K562 (cell line): ENCODE measurements at regions of chr11 and their contacts with region 1.

Region 1: GRCh38 chr11:62787005-62787759 is at the start of gene TMEM179B:
- DNase-seq: peak; percentile 83 to 99 (median 90)
- ATAC-seq: peak; percentile 80
- H3K4me3 ChIP-seq: peak within 1 kb of the TSS; percentile 82
- H3K27ac ChIP-seq: peak within 1 kb of the TSS; percentile 92
- H3K4me1 ChIP-seq: peaks cover 27 to 29% of the 10 kb centered on the region in 2 experiments
- H3K27me3 ChIP-seq: no peaks in the 10 kb centered on the region
- CTCF ChIP-seq: peak; percentile 67 to 90 (median 81)
- EP300 ChIP-seq: no peak
- POLR2A ChIP-seq: peak; percentile 96
- RAD21 ChIP-seq: peak; percentile 28 to 52; a peak in 3 of 4 replicates
- polyA plus RNA-seq, gene TMEM179B: 88.6 to 105 TPM

Region 2: DNA sequence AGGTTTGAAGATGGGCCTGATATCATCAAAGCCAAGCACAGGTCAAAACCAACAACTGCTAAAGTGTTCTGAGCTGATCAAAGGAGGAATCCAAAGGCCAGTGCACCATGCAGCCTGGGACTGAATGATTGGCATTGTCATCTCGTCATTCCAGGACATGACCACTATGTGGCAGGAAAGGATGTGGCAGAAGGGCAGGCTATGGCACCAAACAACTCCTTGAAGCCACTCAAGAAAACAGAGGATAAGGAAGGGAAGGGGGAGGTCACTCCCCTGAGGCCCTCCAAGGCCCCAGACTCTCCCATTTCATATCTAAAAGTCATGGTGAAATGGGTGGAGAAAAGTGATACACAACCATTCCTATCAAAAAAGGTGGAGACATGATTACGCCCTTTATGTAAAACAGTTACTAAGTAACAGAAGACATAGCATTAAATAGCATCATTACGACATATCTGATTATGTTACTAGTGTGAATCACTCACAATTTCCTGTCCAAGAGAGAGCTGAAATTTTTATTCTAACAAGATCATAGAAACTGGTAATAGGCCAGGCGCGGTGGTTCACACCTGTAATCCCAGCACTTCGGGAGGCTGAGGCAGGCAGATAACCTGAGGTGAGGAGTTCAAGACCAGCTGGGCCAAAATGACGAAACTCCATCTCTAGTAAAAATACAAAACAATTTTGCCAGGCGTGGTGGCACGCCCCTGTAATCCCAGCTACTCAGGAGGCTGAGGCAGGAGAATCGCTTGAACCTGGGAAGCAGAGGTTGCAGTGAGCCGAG is 289.9 kb before region 1 on chr11:
- CTCF ChIA-PET with region 1: no interaction called
- POLR2A ChIA-PET with region 1: no interaction called
- in situ Hi-C with region 1: no loop called
- intact Hi-C with region 1: no loop called
- DNase-seq: peak in 3 of 4 experiments; percentile 13 to 38 (median 27)
- ATAC-seq: peak; percentile 5; the same call in 1 of the 3 replicates
- H3K4me3 ChIP-seq: no peak overlapping the region
- H3K27ac ChIP-seq: no peak overlapping the region
- H3K4me1 ChIP-seq: peaks cover 31 to 40% of the 10 kb centered on the region in 2 experiments; a peak in 4 of 5 replicates
- H3K27me3 ChIP-seq: no peaks in the 10 kb centered on the region
- CTCF ChIP-seq: peak; percentile 30 to 59 (median 48)
- EP300 ChIP-seq: no peak
- POLR2A ChIP-seq: no peak
- RAD21 ChIP-seq: peak in 1 of 2 experiments; percentile 57; a peak in 3 of 4 replicates

Region 3: DNA sequence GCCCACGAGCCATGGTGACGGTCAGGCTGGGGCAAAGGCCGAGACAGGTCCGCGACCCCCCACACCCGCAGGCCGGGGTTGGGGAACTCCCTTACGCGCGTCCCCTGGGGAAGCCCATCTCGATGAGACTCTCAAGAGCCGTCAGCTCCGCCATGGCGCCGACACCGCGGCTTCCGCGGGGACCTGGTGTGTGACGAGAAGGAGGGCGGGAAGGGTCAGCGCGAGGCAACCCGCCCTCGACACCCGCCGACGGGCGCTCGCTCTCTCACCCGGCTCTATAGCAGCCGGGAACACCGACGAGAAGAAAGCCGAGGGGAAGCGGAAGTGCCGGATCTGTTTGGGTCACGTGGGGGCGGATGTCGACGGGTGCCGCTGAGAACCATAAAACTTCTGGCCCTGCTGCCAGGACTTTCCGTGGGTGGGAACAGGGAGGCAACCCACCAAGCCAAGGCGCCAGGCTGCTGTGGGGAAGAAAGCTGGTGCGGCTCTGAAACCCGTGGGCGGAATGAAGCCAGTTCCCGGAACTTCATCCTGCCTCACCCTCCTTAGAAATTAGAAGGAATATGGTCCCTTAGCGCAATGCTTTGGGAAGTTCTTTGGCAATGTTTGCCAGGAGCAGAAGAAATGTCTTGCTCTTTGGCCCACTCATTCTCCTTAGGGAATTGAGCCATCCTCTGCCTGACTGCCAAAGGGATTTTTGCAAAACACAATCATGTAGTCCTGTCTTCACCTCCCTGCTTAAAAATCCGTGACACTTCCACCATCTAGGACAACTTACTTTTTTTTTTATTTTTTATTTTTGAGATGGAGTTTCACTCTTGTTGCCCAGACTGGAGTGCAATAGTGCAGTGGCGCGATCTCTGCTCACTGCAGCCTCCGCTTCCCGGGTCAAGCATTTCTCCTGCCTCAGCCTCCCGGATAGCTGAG is 108.1 kb before region 1 on chr11 and contains the start of gene UBXN1:
- CTCF ChIA-PET with region 1: no interaction called
- POLR2A ChIA-PET with region 1: no interaction called
- in situ Hi-C with region 1: no loop called
- intact Hi-C with region 1: no loop called
- DNase-seq: peak; percentile 86 to 94 (median 88)
- ATAC-seq: peak; percentile 85
- H3K4me3 ChIP-seq: peak within 1 kb of the TSS; percentile 81
- H3K27ac ChIP-seq: peak within 1 kb of the TSS; percentile 80
- H3K4me1 ChIP-seq: peaks cover 25 to 43% of the 10 kb centered on the region in 2 experiments; a peak in 4 of 5 replicates
- H3K27me3 ChIP-seq: no peaks in the 10 kb centered on the region
- CTCF ChIP-seq: no peak
- EP300 ChIP-seq: no peak; the same call in 1 of the 2 replicates
- POLR2A ChIP-seq: peak; percentile 88
- RAD21 ChIP-seq: 0 out of 4 replicates have a peak, but pooled peaks of 1 of the 2 experiments have one; percentile 5
- polyA plus RNA-seq, gene UBXN1: 4.8 to 10.4 TPM

Region 4: DNA sequence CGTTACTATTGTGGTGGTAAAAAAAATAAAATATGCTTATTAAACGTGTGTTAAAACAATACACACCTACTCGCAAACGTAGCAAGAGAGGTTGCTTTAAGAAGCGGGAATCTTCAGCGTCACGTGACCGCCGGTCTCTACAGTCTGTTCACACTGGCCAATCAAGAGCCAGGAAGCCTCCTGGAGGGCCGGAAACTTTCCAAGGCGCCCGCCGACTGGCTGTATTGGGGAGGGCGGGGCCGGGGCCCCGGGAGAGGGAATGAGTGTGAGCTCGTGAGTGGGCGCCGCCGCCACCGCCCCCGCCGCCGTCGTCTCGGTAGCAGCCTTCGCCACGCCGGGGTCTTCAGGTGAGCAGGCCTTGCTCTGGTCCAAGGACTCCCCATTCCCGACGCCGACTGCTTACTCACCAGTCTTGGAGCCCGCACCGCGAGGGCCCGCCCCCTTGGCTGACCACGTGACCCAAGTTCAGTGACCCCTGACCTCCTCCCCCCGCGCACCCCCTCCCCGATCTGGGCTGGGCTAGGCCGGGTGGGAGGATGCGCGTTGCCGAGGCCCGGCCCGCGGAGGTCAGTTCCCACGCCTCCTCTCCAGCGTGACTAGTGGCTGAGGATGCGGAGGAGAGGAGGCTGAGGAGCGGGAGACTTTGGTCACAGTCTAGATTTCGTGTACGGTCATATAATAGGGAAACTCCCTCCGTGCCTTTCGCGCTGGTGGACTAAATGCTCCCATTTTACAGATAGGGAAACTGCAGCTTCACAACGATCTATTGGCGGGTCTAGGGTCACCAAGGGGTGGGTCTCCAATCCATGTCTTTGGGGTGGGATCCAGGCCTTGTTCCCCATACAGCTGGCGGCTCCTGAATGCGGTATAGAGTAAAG is 15.8 kb before region 1 on chr11 and contains the start of gene TAF6L:
- CTCF ChIA-PET with region 1: no interaction called
- POLR2A ChIA-PET with region 1: interaction called, 16 read pairs
- in situ Hi-C with region 1: no loop called
- intact Hi-C with region 1: no loop called
- DNase-seq: peak; percentile 97 to 99 (median 98)
- ATAC-seq: peak; percentile 95
- H3K4me3 ChIP-seq: peak within 1 kb of the TSS; percentile 48
- H3K27ac ChIP-seq: peak within 1 kb of the TSS; percentile 88
- H3K4me1 ChIP-seq: peaks cover 9 to 24% of the 10 kb centered on the region in 2 experiments
- H3K27me3 ChIP-seq: no peaks in the 10 kb centered on the region
- CTCF ChIP-seq: no peak; a peak in 1 of 6 replicates
- EP300 ChIP-seq: no peak; the same call in 1 of the 2 replicates
- POLR2A ChIP-seq: peak; percentile 86
- RAD21 ChIP-seq: peak in 1 of 2 experiments; percentile 20; a peak in 2 of 4 replicates
- polyA plus RNA-seq, gene TAF6L: 0.04 to 0.25 TPM

Region 5: GRCh38 chr11:62831520-62832335 is 44.5 kb after region 1 on chr11 and contains the start of gene STX5:
- CTCF ChIA-PET with region 1: no interaction called
- POLR2A ChIA-PET with region 1: interaction called, 5 read pairs
- in situ Hi-C with region 1: no loop called
- intact Hi-C with region 1: loop called (anchors 2 kb)
- DNase-seq: peak; percentile 94 to 99 (median 96)
- ATAC-seq: peak; percentile 94
- H3K4me3 ChIP-seq: peak within 1 kb of the TSS; percentile 94
- H3K27ac ChIP-seq: peak within 1 kb of the TSS; percentile 98
- H3K4me1 ChIP-seq: peaks cover 7 to 17% of the 10 kb centered on the region in 2 experiments; a peak in 4 of 5 replicates
- H3K27me3 ChIP-seq: no peaks in the 10 kb centered on the region
- CTCF ChIP-seq: no peak
- EP300 ChIP-seq: no peak
- POLR2A ChIP-seq: peak; percentile 92
- RAD21 ChIP-seq: no peak
- polyA plus RNA-seq, gene STX5: 2.8 to 3.6 TPM

Region 6: GRCh38 chr11:62880803-62881578 is 93.8 kb after region 1 on chr11 and contains the start of gene SLC3A2:
- CTCF ChIA-PET with region 1: interaction called, 6 read pairs
- POLR2A ChIA-PET with region 1: interaction called, 35 read pairs
- in situ Hi-C with region 1: no loop called
- intact Hi-C with region 1: loop called (anchors 2 kb)
- DNase-seq: peak; percentile 83 to 95 (median 86)
- ATAC-seq: peak; percentile 88
- H3K4me3 ChIP-seq: peak within 1 kb of the TSS; percentile 56
- H3K27ac ChIP-seq: peak within 1 kb of the TSS; percentile 95
- H3K4me1 ChIP-seq: peaks cover 56 to 58% of the 10 kb centered on the region in 2 experiments
- H3K27me3 ChIP-seq: no peaks in the 10 kb centered on the region
- CTCF ChIP-seq: peak; percentile 72 to 80 (median 77)
- EP300 ChIP-seq: no peak
- POLR2A ChIP-seq: peak; percentile 99
- RAD21 ChIP-seq: peak; percentile 24 to 43; a peak in 2 of 4 replicates
- polyA plus RNA-seq, gene SLC3A2: 20.0 to 39.7 TPM

Region 7: DNA sequence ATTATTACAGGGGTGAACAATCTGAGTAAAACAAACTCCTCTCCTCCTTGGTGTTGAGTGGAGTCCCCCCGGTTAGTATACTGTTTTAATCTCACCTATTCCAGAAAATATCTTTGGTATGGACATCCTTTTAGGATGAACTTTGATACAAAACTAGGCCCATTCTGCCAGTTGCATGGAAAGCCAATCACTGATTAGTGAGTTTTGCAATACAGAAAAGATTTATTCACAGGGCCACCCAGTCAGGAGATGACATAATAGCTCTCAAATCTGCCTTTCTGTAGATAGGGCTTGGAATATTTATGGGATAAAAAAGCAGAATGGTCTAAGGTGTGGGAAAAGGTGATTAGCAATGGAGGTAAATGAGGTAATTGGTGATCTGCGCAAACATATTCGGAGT is 486.5 kb after region 1 on chr11:
- CTCF ChIA-PET with region 1: no interaction called
- POLR2A ChIA-PET with region 1: no interaction called
- in situ Hi-C with region 1: no loop called
- intact Hi-C with region 1: no loop called
- DNase-seq: no peak
- ATAC-seq: no peak
- H3K4me3 ChIP-seq: no peak overlapping the region
- H3K27ac ChIP-seq: no peak overlapping the region
- H3K4me1 ChIP-seq: no peaks in the 10 kb centered on the region
- H3K27me3 ChIP-seq: 0 out of 5 replicates have a peak, but pooled peaks cover 0 to 3% of the 10 kb centered on the region in 2 experiments
- CTCF ChIP-seq: no peak
- EP300 ChIP-seq: no peak
- POLR2A ChIP-seq: no peak
- RAD21 ChIP-seq: no peak